WTC11 (cell line): ENCODE measurements at regions of chr12 and their contacts with region 1.

Region 1: GRCh38 chr12:109844983-109845823 is 12.0 kb upstream of the TRPV4 start:
- DNase-seq: peak; percentile 94
- ATAC-seq: peak; percentile 93
- H3K4me3 Mint-ChIP-seq: no peak overlapping the region
- H3K27ac Mint-ChIP-seq: no peak overlapping the region
- H3K4me1 Mint-ChIP-seq: peaks cover 11% of the 10 kb centered on the region
- H3K27me3 Mint-ChIP-seq: no peaks in the 10 kb centered on the region; the same call in 1 of the 2 replicates
- CTCF ChIP-seq: peak; percentile 96

Region 2: DNA sequence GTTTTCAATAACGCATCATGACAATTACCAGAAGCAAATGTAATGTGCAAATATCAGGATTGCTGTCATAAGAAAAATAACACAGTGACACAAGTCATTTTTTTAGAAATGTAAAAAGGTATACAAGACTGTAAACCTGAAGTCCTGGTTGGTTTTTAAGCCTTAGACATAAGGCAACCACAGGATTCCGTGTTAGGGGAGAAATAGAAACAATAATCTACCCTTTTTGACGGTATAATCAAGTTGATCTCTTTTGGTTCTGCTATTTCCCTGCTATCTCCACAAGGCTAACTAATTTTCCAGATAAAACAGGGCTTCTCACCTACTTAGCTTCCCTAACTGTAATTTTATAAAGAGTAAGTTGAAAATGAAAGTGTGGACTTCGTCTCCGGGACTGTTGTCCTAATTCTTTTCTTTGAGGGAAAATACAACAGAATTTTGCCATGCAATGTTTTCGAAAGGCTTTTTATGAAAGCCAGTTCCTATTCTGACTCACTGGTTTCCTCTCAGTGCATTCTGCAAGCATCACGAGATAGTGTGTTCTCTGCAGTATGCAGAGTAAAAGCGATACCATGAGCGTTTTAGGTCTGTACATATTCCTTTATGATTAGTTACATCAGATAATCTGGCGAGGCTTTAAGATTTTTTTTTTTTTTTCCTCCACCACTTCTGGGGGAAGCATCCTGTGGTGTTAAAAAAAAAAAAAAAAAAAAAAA is 486.9 kb before region 1 on chr12:
- CTCF ChIA-PET with region 1: no interaction called
- POLR2A ChIA-PET with region 1: no interaction called
- DNase-seq: no peak
- ATAC-seq: no peak
- H3K4me3 Mint-ChIP-seq: no peak overlapping the region
- H3K27ac Mint-ChIP-seq: no peak overlapping the region
- H3K4me1 Mint-ChIP-seq: peaks cover 4% of the 10 kb centered on the region
- H3K27me3 Mint-ChIP-seq: no peaks in the 10 kb centered on the region; the same call in 1 of the 2 replicates
- CTCF ChIP-seq: no peak

Region 3: GRCh38 chr12:109804820-109805761 is 40.1 kb before region 1 on chr12:
- CTCF ChIA-PET with region 1: interaction called, 68 read pairs
- POLR2A ChIA-PET with region 1: no interaction called
- DNase-seq: peak; percentile 82
- ATAC-seq: peak; percentile 89
- H3K4me3 Mint-ChIP-seq: no peak overlapping the region
- H3K27ac Mint-ChIP-seq: no peak overlapping the region
- H3K4me1 Mint-ChIP-seq: no peaks in the 10 kb centered on the region
- H3K27me3 Mint-ChIP-seq: no peaks in the 10 kb centered on the region
- CTCF ChIP-seq: peak; percentile 96

Region 4: GRCh38 chr12:109833307-109834189 is 11.7 kb before region 1 on chr12 and contains the start of gene TRPV4:
- CTCF ChIA-PET with region 1: interaction called, 63 read pairs
- POLR2A ChIA-PET with region 1: no interaction called
- DNase-seq: peak; percentile 59
- ATAC-seq: peak; percentile 74
- H3K4me3 Mint-ChIP-seq: peak within 1 kb of the TSS; percentile 63
- H3K27ac Mint-ChIP-seq: no peak within 1 kb of the TSS
- H3K4me1 Mint-ChIP-seq: peaks cover 6% of the 10 kb centered on the region
- H3K27me3 Mint-ChIP-seq: peaks cover 8% of the 10 kb centered on the region
- CTCF ChIP-seq: no peak
- total RNA-seq, gene TRPV4: 2.9 to 5.4 TPM (median 5.1 TPM) in 3 replicates

Region 5: GRCh38 chr12:109863847-109864712 is 18.9 kb after region 1 on chr12:
- CTCF ChIA-PET with region 1: interaction called, 17 read pairs
- POLR2A ChIA-PET with region 1: interaction called, 5 read pairs
- DNase-seq: no peak
- ATAC-seq: peak; percentile 55
- H3K4me3 Mint-ChIP-seq: no peak overlapping the region
- H3K27ac Mint-ChIP-seq: peak overlapping the region; percentile 57; the same call in 1 of the 2 replicates
- H3K4me1 Mint-ChIP-seq: peaks cover 18% of the 10 kb centered on the region
- H3K27me3 Mint-ChIP-seq: no peaks in the 10 kb centered on the region
- CTCF ChIP-seq: no peak

Region 6: GRCh38 chr12:109880016-109880931 is 35.1 kb after region 1 on chr12 and contains the start of gene GLTP:
- CTCF ChIA-PET with region 1: interaction called, 15 read pairs
- POLR2A ChIA-PET with region 1: no interaction called
- DNase-seq: peak; percentile 87
- ATAC-seq: peak; percentile 93
- H3K4me3 Mint-ChIP-seq: peak within 1 kb of the TSS; percentile 94
- H3K27ac Mint-ChIP-seq: peak within 1 kb of the TSS; percentile 93
- H3K4me1 Mint-ChIP-seq: peaks cover 51% of the 10 kb centered on the region
- H3K27me3 Mint-ChIP-seq: peaks cover 17% of the 10 kb centered on the region
- CTCF ChIP-seq: no peak
- total RNA-seq, gene GLTP: 21.6 to 25.8 TPM (median 22.8 TPM) in 3 replicates

Region 7: DNA sequence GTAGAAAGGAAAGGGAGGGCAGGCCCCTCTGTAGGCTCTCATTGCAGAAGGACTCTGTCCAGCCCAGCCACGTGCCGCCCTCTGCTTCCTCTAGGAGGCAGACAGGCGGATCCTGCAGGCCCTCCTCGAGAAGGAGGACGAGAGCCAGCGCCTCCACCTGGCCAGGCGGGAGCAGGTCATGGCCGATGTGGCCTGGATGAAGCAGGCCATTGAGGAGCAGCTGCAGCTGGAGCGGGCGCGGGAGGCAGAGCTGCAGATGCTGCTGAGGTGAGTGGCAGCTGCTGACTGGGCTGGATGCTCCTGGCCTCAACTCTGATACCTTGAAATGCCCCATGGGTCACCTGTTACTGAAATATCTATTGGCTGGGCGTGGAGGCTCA is 65.8 kb after region 1 on chr12:
- CTCF ChIA-PET with region 1: interaction called, 14 read pairs
- POLR2A ChIA-PET with region 1: no interaction called
- DNase-seq: peak; percentile 93
- ATAC-seq: peak; percentile 99
- H3K4me3 Mint-ChIP-seq: no peak overlapping the region
- H3K27ac Mint-ChIP-seq: no peak overlapping the region
- H3K4me1 Mint-ChIP-seq: peaks cover 16% of the 10 kb centered on the region
- H3K27me3 Mint-ChIP-seq: peaks cover 50% of the 10 kb centered on the region
- CTCF ChIP-seq: peak; percentile 47; the same call in 1 of the 2 replicates

Region 8: DNA sequence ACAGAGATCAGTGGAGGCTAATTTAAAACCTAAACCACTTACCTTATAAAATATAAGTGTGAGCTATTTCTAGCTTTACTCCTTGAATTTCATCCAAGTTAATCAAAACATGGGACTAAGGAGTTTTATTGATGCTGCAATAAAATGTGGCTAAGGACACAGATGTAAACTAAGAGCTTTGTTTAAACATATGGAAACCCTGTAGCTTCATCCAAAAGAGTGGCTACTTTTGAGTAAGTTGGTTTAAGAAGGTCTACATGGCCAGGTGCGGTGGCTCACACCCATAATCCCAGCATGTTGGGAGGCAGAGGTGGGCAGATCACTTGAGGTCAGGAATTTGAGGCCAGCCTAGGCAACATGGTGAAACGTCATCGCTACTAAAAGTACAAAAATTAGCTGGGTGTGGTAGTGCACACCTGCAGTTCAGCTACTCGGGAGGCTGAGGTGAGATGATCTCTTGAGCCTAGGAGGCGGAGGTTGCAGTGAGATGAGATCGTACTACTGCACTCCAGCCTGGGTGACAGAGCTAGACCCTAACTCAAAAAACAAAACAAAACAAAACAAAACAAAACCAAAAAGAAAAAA is 95.2 kb after region 1 on chr12:
- CTCF ChIA-PET with region 1: interaction called, 12 read pairs
- POLR2A ChIA-PET with region 1: no interaction called
- DNase-seq: no peak
- ATAC-seq: no peak
- H3K4me3 Mint-ChIP-seq: no peak overlapping the region
- H3K27ac Mint-ChIP-seq: no peak overlapping the region
- H3K4me1 Mint-ChIP-seq: peaks cover 12% of the 10 kb centered on the region
- H3K27me3 Mint-ChIP-seq: no peaks in the 10 kb centered on the region
- CTCF ChIP-seq: no peak